BJ (cell line): ENCODE measurements at regions of chr17 and their contacts with region 1.

Region 1: DNA sequence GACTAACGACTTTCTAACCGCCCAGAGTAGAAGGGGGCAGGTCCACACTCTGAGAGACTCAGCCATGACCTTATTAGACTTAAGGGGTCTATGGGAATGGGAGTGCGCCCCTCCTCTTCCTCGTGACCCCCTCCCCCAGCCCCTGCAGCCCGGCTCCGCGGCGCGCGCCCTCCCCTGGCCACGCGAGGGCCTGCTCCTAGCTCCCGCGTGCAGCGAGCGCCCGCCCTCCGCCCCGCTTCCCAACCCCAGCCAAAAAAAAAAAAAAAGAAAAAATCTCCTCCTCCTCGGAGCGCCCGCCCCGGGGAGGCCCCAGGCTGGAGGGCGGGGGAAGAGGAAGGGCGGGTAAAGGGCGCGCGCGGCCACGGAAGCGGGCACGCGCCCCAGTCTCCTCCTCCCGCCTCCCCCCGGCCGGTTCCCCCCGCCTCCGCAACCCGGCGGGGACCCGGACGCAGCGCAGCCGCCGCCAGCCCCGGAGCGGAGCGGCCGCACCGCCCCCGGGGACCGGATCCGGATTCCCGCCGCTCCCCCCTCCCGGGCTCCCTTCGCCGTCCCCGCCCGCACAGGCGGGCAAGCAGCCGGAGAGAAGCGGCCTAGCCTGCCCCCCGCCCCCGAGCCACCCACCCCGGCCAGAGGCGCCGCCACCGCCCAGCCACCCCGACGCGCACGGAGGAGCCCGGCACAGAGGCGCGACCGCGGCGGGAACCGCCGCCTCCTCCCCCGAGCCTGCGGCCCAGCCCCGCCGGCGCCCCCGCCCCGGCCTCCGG is 949 bp downstream of the UBTF start:
- DNase-seq: no peak
- H3K4me3 ChIP-seq: peak overlapping the region; percentile 92
- H3K27me3 ChIP-seq: no peaks in the 10 kb centered on the region
- CTCF ChIP-seq: peak; percentile 54

Region 2: DNA sequence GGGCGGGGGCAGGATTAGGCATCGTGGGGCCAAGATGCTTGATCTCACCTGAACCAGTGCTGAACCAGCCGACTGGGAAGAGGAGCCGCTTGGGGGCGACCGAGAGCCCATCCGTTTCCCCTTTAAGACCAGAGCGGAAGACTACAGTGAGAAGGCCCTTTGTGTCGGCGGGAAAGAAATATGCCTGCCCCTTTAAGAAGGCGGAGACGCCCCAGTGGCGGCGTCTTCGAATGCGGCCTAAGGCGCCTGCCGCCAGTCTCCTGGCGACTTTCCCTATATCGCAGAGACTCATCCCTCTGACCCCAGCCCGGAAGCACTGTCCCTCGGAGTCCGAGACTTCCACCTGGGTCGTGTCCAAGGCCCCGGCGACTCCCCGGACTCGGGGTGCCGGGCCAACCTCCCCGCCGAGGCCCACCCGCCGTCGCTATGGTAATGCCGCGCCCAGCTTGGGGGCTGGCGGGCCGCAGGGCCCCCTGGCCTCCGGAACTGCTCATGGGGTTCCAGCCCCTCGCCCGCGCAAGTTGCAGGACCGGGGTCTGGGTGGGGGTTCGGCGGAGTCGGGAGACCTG is 76.7 kb before region 1 on chr17 and contains the start of gene HROB:
- CTCF ChIA-PET with region 1: no interaction called
- POLR2A ChIA-PET with region 1: no interaction called
- DNase-seq: peak; percentile 66
- H3K4me3 ChIP-seq: peak within 1 kb of the TSS; percentile 94
- H3K27me3 ChIP-seq: no peaks in the 10 kb centered on the region
- CTCF ChIP-seq: peak; percentile 93
- polyA plus RNA-seq, gene HROB: 2.1 and 3.4 TPM in 2 replicates

Region 3: GRCh38 chr17:44235583-44235936 is 17.0 kb after region 1 on chr17:
- CTCF ChIA-PET with region 1: no interaction called
- POLR2A ChIA-PET with region 1: no interaction called
- DNase-seq: no peak
- H3K4me3 ChIP-seq: no peak overlapping the region
- H3K27me3 ChIP-seq: 0 out of 2 replicates have a peak, but pooled peaks cover 2% of the 10 kb centered on the region
- CTCF ChIP-seq: no peak

Region 4: GRCh38 chr17:44315760-44316731 is 97.5 kb after region 1 on chr17:
- CTCF ChIA-PET with region 1: interaction called, 4 read pairs
- POLR2A ChIA-PET with region 1: interaction called, 10 read pairs
- DNase-seq: no peak
- H3K4me3 ChIP-seq: peak overlapping the region; percentile 40; the same call in 1 of the 2 replicates
- H3K27me3 ChIP-seq: peaks cover 30% of the 10 kb centered on the region
- CTCF ChIP-seq: no peak

Region 5: DNA sequence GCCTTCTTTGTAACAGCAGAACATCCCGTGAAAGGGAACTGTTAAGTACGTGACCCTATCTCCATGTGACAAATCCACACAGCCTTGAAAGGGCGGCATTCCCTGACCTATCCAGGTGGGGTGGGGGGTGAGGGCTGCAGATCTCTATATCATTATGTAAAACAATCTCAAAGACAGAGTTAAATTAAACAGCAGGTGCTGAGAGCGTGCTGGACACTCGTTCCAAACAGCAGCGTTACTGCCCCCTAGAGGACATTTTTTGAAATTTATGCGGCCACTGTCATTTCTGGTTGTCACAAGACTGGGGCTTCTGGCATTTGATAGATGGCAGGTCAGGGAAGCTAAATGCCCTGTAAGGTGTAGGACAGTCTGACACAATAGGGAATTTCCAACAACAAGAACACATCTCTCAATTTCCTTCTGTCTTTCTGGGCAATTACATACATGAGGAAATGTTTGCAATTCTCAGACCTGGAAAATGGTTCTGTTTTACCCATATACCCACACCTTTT is 112.8 kb after region 1 on chr17:
- CTCF ChIA-PET with region 1: interaction called, 59 read pairs
- POLR2A ChIA-PET with region 1: interaction called, 4 read pairs
- DNase-seq: peak; percentile 24
- H3K4me3 ChIP-seq: no peak overlapping the region
- H3K27me3 ChIP-seq: 0 out of 2 replicates have a peak, but pooled peaks cover 2% of the 10 kb centered on the region
- CTCF ChIP-seq: peak; percentile 80